CD8-positive, alpha-beta T cell (primary cell): ENCODE measurements at regions of chr12 and their contacts with region 1.

Region 1: GRCh38 chr12:685388-685787 is 22.1 kb upstream of the NINJ2 start:
- DNase-seq: peak; percentile 69 to 97 (median 85)
- ATAC-seq: peak; percentile 89
- H3K4me3 ChIP-seq: no peak overlapping the region
- H3K4me3 Mint-ChIP-seq: peak overlapping the region; percentile 47
- H3K27ac ChIP-seq: peak overlapping the region; percentile 67 to 87
- H3K27ac Mint-ChIP-seq: peak overlapping the region; percentile 98
- H3K4me1 ChIP-seq: peaks cover 26% of the 10 kb centered on the region
- H3K4me1 Mint-ChIP-seq: peaks cover 50% of the 10 kb centered on the region
- H3K27me3 ChIP-seq: no peaks in the 10 kb centered on the region
- H3K27me3 Mint-ChIP-seq: no peaks in the 10 kb centered on the region
- CTCF ChIP-seq: no peak

Region 2: GRCh38 chr12:642633-643474 is 42.5 kb before region 1 on chr12:
- CTCF ChIA-PET with region 1: interaction called, 3 read pairs
- POLR2A ChIA-PET with region 1: interaction called, 10 read pairs
- intact Hi-C with region 1: loop called (anchors 1 to 5 kb)
- DNase-seq: peak; percentile 39 to 91 (median 77)
- ATAC-seq: peak; percentile 75
- H3K4me3 ChIP-seq: peak overlapping the region; percentile 62 to 70
- H3K4me3 Mint-ChIP-seq: peak overlapping the region; percentile 89
- H3K27ac ChIP-seq: peak overlapping the region; percentile 72 to 88
- H3K27ac Mint-ChIP-seq: peak overlapping the region; percentile 97
- H3K4me1 ChIP-seq: peaks cover 36% of the 10 kb centered on the region
- H3K4me1 Mint-ChIP-seq: peaks cover 54% of the 10 kb centered on the region
- H3K27me3 ChIP-seq: no peaks in the 10 kb centered on the region
- H3K27me3 Mint-ChIP-seq: no peaks in the 10 kb centered on the region
- CTCF ChIP-seq: peak; percentile 34

Region 3: GRCh38 chr12:666766-667308 is 18.6 kb before region 1 on chr12:
- CTCF ChIA-PET with region 1: interaction called, 8 read pairs
- POLR2A ChIA-PET with region 1: interaction called, 5 read pairs
- intact Hi-C with region 1: loop called in 1 of 2 experiments (anchors 2 kb)
- DNase-seq: peak in 2 of 9 experiments; percentile 61
- ATAC-seq: peak; percentile 39
- H3K4me3 ChIP-seq: no peak overlapping the region
- H3K4me3 Mint-ChIP-seq: peak overlapping the region; percentile 18
- H3K27ac ChIP-seq: no peak overlapping the region
- H3K27ac Mint-ChIP-seq: peak overlapping the region; percentile 3
- H3K4me1 ChIP-seq: peaks cover 37% of the 10 kb centered on the region
- H3K4me1 Mint-ChIP-seq: peaks cover 58% of the 10 kb centered on the region
- H3K27me3 ChIP-seq: no peaks in the 10 kb centered on the region
- H3K27me3 Mint-ChIP-seq: no peaks in the 10 kb centered on the region
- CTCF ChIP-seq: no peak

Region 4: GRCh38 chr12:674272-674781 is 11.1 kb before region 1 on chr12:
- CTCF ChIA-PET with region 1: interaction called, 3 read pairs
- POLR2A ChIA-PET with region 1: interaction called, 4 read pairs
- intact Hi-C with region 1: loop called in 1 of 2 experiments (anchors 1 kb)
- DNase-seq: peak; percentile 21 to 92 (median 66)
- ATAC-seq: peak; percentile 93
- H3K4me3 ChIP-seq: no peak overlapping the region
- H3K4me3 Mint-ChIP-seq: peak overlapping the region; percentile 76
- H3K27ac ChIP-seq: peak overlapping the region; percentile 5 to 92
- H3K27ac Mint-ChIP-seq: peak overlapping the region; percentile 90
- H3K4me1 ChIP-seq: peaks cover 36% of the 10 kb centered on the region
- H3K4me1 Mint-ChIP-seq: peaks cover 52% of the 10 kb centered on the region
- H3K27me3 ChIP-seq: no peaks in the 10 kb centered on the region
- H3K27me3 Mint-ChIP-seq: no peaks in the 10 kb centered on the region
- CTCF ChIP-seq: no peak

Region 5: GRCh38 chr12:724194-724855 is 38.9 kb after region 1 on chr12:
- CTCF ChIA-PET with region 1: no interaction called
- POLR2A ChIA-PET with region 1: interaction called, 4 read pairs
- intact Hi-C with region 1: loop called (anchors 2 kb)
- DNase-seq: peak in 5 of 9 experiments; percentile 17 to 59 (median 30)
- ATAC-seq: peak; percentile 66
- H3K4me3 ChIP-seq: no peak overlapping the region
- H3K4me3 Mint-ChIP-seq: peak overlapping the region; percentile 6
- H3K27ac ChIP-seq: peak overlapping the region in 1 of 2 experiments; percentile 6
- H3K27ac Mint-ChIP-seq: peak overlapping the region; percentile 83
- H3K4me1 ChIP-seq: peaks cover 58% of the 10 kb centered on the region
- H3K4me1 Mint-ChIP-seq: peaks cover 75% of the 10 kb centered on the region
- H3K27me3 ChIP-seq: no peaks in the 10 kb centered on the region
- H3K27me3 Mint-ChIP-seq: no peaks in the 10 kb centered on the region
- CTCF ChIP-seq: no peak

Region 6: DNA sequence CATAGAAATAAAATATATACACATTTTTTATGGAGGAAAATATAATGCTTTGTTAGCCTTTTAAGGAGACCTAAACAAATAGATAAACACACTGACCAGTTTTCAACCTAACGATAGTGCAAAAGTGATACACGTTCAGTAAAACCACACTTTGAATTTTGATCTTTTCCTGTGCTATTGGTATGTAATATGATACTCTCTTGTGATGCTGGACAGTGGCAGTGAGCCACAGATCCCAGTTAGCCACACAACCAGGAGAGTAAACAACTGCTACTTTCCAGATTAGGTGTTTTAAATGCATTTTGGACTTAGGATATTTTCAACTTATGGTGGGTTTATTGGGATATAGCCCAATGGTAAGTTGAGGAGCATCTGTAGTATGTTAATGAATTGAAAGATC is 548.7 kb after region 1 on chr12:
- CTCF ChIA-PET with region 1: no interaction called
- POLR2A ChIA-PET with region 1: no interaction called
- intact Hi-C with region 1: no loop called
- DNase-seq: no peak
- ATAC-seq: no peak
- H3K4me3 ChIP-seq: no peak overlapping the region
- H3K4me3 Mint-ChIP-seq: no peak overlapping the region
- H3K27ac ChIP-seq: no peak overlapping the region
- H3K27ac Mint-ChIP-seq: no peak overlapping the region
- H3K4me1 ChIP-seq: no peaks in the 10 kb centered on the region
- H3K4me1 Mint-ChIP-seq: peaks cover 2% of the 10 kb centered on the region
- H3K27me3 ChIP-seq: no peaks in the 10 kb centered on the region
- H3K27me3 Mint-ChIP-seq: no peaks in the 10 kb centered on the region
- CTCF ChIP-seq: no peak

Region 7: GRCh38 chr12:2535583-2536204 is 1850.3 kb after region 1 on chr12:
- CTCF ChIA-PET with region 1: no interaction called
- POLR2A ChIA-PET with region 1: no interaction called
- intact Hi-C with region 1: no loop called
- DNase-seq: no peak
- ATAC-seq: no peak
- H3K4me3 ChIP-seq: no peak overlapping the region
- H3K4me3 Mint-ChIP-seq: no peak overlapping the region
- H3K27ac ChIP-seq: no peak overlapping the region
- H3K27ac Mint-ChIP-seq: no peak overlapping the region
- H3K4me1 ChIP-seq: no peaks in the 10 kb centered on the region
- H3K4me1 Mint-ChIP-seq: no peaks in the 10 kb centered on the region
- H3K27me3 ChIP-seq: no peaks in the 10 kb centered on the region
- H3K27me3 Mint-ChIP-seq: peaks cover 4% of the 10 kb centered on the region
- CTCF ChIP-seq: no peak